ENCODE measurements at regions of chr17 and their contacts with region 1.

Region 1: DNA sequence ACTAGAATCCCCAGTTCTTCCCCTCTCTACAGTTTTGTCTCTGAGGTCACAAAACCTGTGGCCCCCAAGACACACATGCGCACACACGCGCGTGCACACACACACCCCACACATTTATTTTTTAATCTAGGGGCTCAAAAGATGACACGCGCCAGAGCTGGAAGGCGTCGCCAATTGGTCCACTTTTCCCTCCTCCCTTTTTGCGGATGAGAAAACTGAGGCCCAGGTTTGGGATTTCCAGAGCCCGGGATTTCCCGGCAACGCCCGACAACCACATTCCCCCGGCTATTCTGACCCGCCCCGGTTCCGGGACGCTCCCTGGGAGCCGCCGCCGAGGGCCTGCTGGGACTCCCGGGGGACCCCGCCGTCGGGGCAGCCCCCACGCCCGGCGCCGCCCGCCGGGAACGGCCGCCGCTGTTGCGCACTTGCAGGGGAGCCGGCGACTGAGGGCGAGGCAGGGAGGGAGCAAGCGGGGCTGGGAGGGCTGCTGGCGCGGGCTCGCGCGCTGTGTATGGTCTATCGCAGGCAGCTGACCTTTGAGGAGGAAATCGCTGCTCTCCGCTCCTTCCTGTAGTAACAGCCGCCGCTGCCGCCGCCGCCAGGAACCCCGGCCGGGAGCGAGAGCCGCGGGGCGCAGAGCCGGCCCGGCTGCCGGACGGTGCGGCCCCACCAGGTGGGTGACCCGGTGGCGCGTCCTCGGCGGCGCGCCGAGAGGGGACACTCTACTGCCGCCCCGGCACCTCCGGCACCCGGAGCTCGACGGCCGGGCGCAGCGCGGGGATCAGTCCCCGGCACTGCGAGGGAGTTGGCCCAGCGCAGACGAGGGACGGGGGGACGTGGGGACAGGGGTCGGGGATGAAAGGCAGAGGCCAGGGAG is at the start of gene STAT5A:
- DNase-seq: peak; percentile 70
- ATAC-seq: peak; percentile 77
- H3K4me3 Mint-ChIP-seq: peak within 1 kb of the TSS; percentile 94
- H3K27ac Mint-ChIP-seq: peak within 1 kb of the TSS; percentile 97
- H3K4me1 Mint-ChIP-seq: peaks cover 51% of the 10 kb centered on the region
- H3K27me3 Mint-ChIP-seq: no peaks in the 10 kb centered on the region
- CTCF ChIP-seq: no peak
- total RNA-seq, gene STAT5A: 136 and 140 TPM in 2 replicates

Region 2: GRCh38 chr17:42183741-42184711 is 104.1 kb before region 1 on chr17:
- CTCF ChIA-PET with region 1: no interaction called
- POLR2A ChIA-PET with region 1: interaction called, 5 read pairs
- intact Hi-C with region 1: loop called (anchors 5 kb)
- DNase-seq: peak; percentile 87
- ATAC-seq: peak; percentile 64
- H3K4me3 Mint-ChIP-seq: peak overlapping the region; percentile 93
- H3K27ac Mint-ChIP-seq: peak overlapping the region; percentile 95
- H3K4me1 Mint-ChIP-seq: peaks cover 56% of the 10 kb centered on the region
- H3K27me3 Mint-ChIP-seq: no peaks in the 10 kb centered on the region
- CTCF ChIP-seq: peak; percentile 33

Region 3: GRCh38 chr17:42221937-42222745 is 66.0 kb before region 1 on chr17:
- CTCF ChIA-PET with region 1: interaction called, 10 read pairs
- POLR2A ChIA-PET with region 1: interaction called, 9 read pairs
- intact Hi-C with region 1: loop called (anchors 2 kb)
- DNase-seq: no peak
- ATAC-seq: peak; percentile 81
- H3K4me3 Mint-ChIP-seq: no peak overlapping the region
- H3K27ac Mint-ChIP-seq: no peak overlapping the region
- H3K4me1 Mint-ChIP-seq: no peaks in the 10 kb centered on the region
- H3K27me3 Mint-ChIP-seq: no peaks in the 10 kb centered on the region
- CTCF ChIP-seq: no peak

Region 4: GRCh38 chr17:42276359-42276608 is 11.9 kb before region 1 on chr17 and contains the start of gene STAT5B:
- CTCF ChIA-PET with region 1: no interaction called
- POLR2A ChIA-PET with region 1: interaction called, 54 read pairs
- intact Hi-C with region 1: loop called (anchors 1 kb)
- DNase-seq: peak; percentile 79
- ATAC-seq: peak; percentile 81
- H3K4me3 Mint-ChIP-seq: peak within 1 kb of the TSS; percentile 92
- H3K27ac Mint-ChIP-seq: peak within 1 kb of the TSS; percentile 81
- H3K4me1 Mint-ChIP-seq: peaks cover 52% of the 10 kb centered on the region
- H3K27me3 Mint-ChIP-seq: no peaks in the 10 kb centered on the region
- CTCF ChIP-seq: no peak
- total RNA-seq, gene STAT5B: 80.3 and 82.6 TPM in 2 replicates

Region 5: DNA sequence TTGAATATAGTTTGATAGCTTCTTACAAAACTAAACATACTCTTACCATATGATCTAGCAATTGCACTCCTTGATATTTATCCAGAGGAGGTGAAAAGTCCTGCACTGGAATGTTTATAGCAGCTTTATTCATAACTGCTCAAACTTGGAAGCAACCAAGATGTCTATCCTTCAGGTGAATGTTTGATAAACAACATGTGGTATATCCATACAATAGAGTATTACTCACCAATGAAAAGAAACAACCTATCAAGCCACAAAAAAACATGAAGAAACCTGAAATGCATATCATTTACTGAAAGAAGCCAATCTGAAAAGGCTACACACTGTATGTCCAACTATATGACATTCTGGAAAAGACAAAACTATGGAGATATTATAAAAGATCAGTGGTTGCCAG is 84.0 kb after region 1 on chr17:
- CTCF ChIA-PET with region 1: no interaction called
- POLR2A ChIA-PET with region 1: no interaction called
- intact Hi-C with region 1: no loop called
- DNase-seq: no peak
- ATAC-seq: no peak
- H3K4me3 Mint-ChIP-seq: no peak overlapping the region
- H3K27ac Mint-ChIP-seq: no peak overlapping the region
- H3K4me1 Mint-ChIP-seq: peaks cover 43% of the 10 kb centered on the region
- H3K27me3 Mint-ChIP-seq: no peaks in the 10 kb centered on the region
- CTCF ChIP-seq: no peak